Adrenal gland (tissue), 19 donors: ENCODE measurements at regions of chr10 and their contacts with region 1.

Region 1: GRCh38 chr10:14822879-14823755 is 14.7 kb downstream of the CDNF start:
- DNase-seq: peak in 6 of 7 donors; percentile 27 to 72 (median 42)
- H3K4me3 ChIP-seq: no peak overlapping the region
- H3K27ac ChIP-seq: no peak overlapping the region
- H3K4me1 ChIP-seq: peaks cover 0 to 7% of the 10 kb centered on the region in 2 donors
- H3K27me3 ChIP-seq: no peaks in the 10 kb centered on the region
- CTCF ChIP-seq: peak; percentile 39 to 71 (median 66)
- POLR2A ChIP-seq: no peak

Region 2: GRCh38 chr10:14500172-14500765 is 322.8 kb before region 1 on chr10:
- intact Hi-C with region 1: loop called in 1 of 2 experiments (anchors 5 kb)
- DNase-seq: no peak
- H3K4me3 ChIP-seq: no peak overlapping the region
- H3K27ac ChIP-seq: no peak overlapping the region
- H3K4me1 ChIP-seq: no peaks in the 10 kb centered on the region
- H3K27me3 ChIP-seq: no peaks in the 10 kb centered on the region
- CTCF ChIP-seq: no peak
- POLR2A ChIP-seq: no peak

Region 3: GRCh38 chr10:14604181-14605142 is 218.7 kb before region 1 on chr10:
- intact Hi-C with region 1: loop called in 1 of 2 experiments (anchors 10 kb)
- DNase-seq: peak; percentile 80 to 88 (median 87)
- H3K4me3 ChIP-seq: peak overlapping the region in 3 of 4 donors; percentile 4 to 75 (median 72)
- H3K27ac ChIP-seq: peak overlapping the region; percentile 64 to 90 (median 80)
- H3K4me1 ChIP-seq: peaks cover 19 to 40% of the 10 kb centered on the region in 2 donors
- H3K27me3 ChIP-seq: no peaks in the 10 kb centered on the region
- CTCF ChIP-seq: no peak
- POLR2A ChIP-seq: peak; percentile 68 to 94

Region 4: GRCh38 chr10:14653271-14654228 is 169.6 kb before region 1 on chr10:
- intact Hi-C with region 1: loop called in 1 of 2 experiments (anchors 5 kb)
- DNase-seq: peak; percentile 49 to 82 (median 61)
- H3K4me3 ChIP-seq: no peak overlapping the region
- H3K27ac ChIP-seq: peak overlapping the region; percentile 6 to 86 (median 73)
- H3K4me1 ChIP-seq: peaks cover 9 to 32% of the 10 kb centered on the region in 2 donors
- H3K27me3 ChIP-seq: no peaks in the 10 kb centered on the region
- CTCF ChIP-seq: no peak
- POLR2A ChIP-seq: no peak